Naive thymus-derived CD4-positive, alpha-beta T cell (primary cell): ENCODE measurements at regions of chrX and their contacts with region 1.

Region 1: GRCh38 chrX:152821145-152821765 is 9.3 kb downstream of the CETN2 start:
- DNase-seq: peak in 1 of 9 donors; percentile 23
- ATAC-seq: no peak
- H3K4me3 ChIP-seq: no peak overlapping the region
- H3K4me3 Mint-ChIP-seq: no peak overlapping the region
- H3K27ac ChIP-seq: no peak overlapping the region
- H3K27ac Mint-ChIP-seq: no peak overlapping the region
- H3K4me1 ChIP-seq: no peaks in the 10 kb centered on the region
- H3K4me1 Mint-ChIP-seq: peaks cover 0 to 3% (median 0%) of the 10 kb centered on the region in 7 donors
- H3K27me3 ChIP-seq: no peaks in the 10 kb centered on the region
- H3K27me3 Mint-ChIP-seq: peaks cover 0 to 10% (median 8%) of the 10 kb centered on the region in 5 donors

Region 2: GRCh38 chrX:151753313-151754041 is 1067.8 kb before region 1 on chrX:
- CTCF ChIA-PET with region 1: no interaction called
- POLR2A ChIA-PET with region 1: no interaction called
- intact Hi-C with region 1: loop called in 1 of 2 experiments (anchors 5 kb)
- DNase-seq: no peak
- ATAC-seq: no peak
- H3K4me3 ChIP-seq: no peak overlapping the region
- H3K4me3 Mint-ChIP-seq: no peak overlapping the region
- H3K27ac ChIP-seq: no peak overlapping the region
- H3K27ac Mint-ChIP-seq: no peak overlapping the region
- H3K4me1 ChIP-seq: no peaks in the 10 kb centered on the region
- H3K4me1 Mint-ChIP-seq: no peaks in the 10 kb centered on the region
- H3K27me3 ChIP-seq: no peaks in the 10 kb centered on the region
- H3K27me3 Mint-ChIP-seq: peaks cover 0 to 34% (median 13%) of the 10 kb centered on the region in 5 donors

Region 3: GRCh38 chrX:152245243-152245642 is 576.0 kb before region 1 on chrX:
- CTCF ChIA-PET with region 1: no interaction called
- POLR2A ChIA-PET with region 1: no interaction called
- intact Hi-C with region 1: no loop called
- DNase-seq: no peak
- ATAC-seq: no peak
- H3K4me3 ChIP-seq: no peak overlapping the region
- H3K4me3 Mint-ChIP-seq: no peak overlapping the region
- H3K27ac ChIP-seq: no peak overlapping the region
- H3K27ac Mint-ChIP-seq: no peak overlapping the region
- H3K4me1 ChIP-seq: no peaks in the 10 kb centered on the region
- H3K4me1 Mint-ChIP-seq: no peaks in the 10 kb centered on the region
- H3K27me3 ChIP-seq: no peaks in the 10 kb centered on the region
- H3K27me3 Mint-ChIP-seq: peaks cover 0 to 4% (median 0%) of the 10 kb centered on the region in 5 donors

Region 4: DNA sequence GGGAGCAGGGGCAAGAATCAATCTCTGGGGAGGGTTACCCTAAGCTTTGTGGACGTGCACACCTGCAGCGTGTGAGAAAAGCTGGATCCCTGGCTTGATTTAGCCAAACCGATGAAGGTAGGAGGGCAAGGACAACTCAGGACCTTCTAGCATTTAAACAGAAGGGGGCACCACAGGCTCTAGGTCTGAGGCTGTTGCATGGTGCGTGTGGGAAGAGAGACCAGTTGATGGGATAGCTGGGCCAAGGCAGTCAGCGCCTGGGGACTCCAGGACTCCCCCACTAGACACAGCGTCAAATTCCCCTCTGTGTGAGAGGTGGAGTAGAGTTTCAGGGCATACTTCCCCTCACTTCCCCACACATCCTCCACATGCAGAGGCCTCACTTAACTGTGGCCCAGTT is 179.3 kb before region 1 on chrX:
- CTCF ChIA-PET with region 1: no interaction called
- POLR2A ChIA-PET with region 1: no interaction called
- intact Hi-C with region 1: loop called in 1 of 2 experiments (anchors 1 kb)
- DNase-seq: no peak
- ATAC-seq: no peak
- H3K4me3 ChIP-seq: no peak overlapping the region
- H3K4me3 Mint-ChIP-seq: no peak overlapping the region
- H3K27ac ChIP-seq: no peak overlapping the region
- H3K27ac Mint-ChIP-seq: no peak overlapping the region
- H3K4me1 ChIP-seq: no peaks in the 10 kb centered on the region
- H3K4me1 Mint-ChIP-seq: peaks cover 0 to 3% (median 0%) of the 10 kb centered on the region in 7 donors
- H3K27me3 ChIP-seq: no peaks in the 10 kb centered on the region
- H3K27me3 Mint-ChIP-seq: peaks cover 8 to 15% (median 10%) of the 10 kb centered on the region in 5 donors